Activated B cell treated with CpG ODN at 0.5 μM for 24 hours (primary cell): ENCODE measurements at regions of chr11 and their contacts with region 1.

Region 1: GRCh38 chr11:26043665-26044064 is 288.3 kb upstream of the ANO3 start:
- DNase-seq: no peak
- ATAC-seq: peak; percentile 65
- H3K4me3 Mint-ChIP-seq: no peak overlapping the region
- H3K27ac Mint-ChIP-seq: no peak overlapping the region
- H3K4me1 Mint-ChIP-seq: peaks cover 14% of the 10 kb centered on the region
- H3K27me3 Mint-ChIP-seq: no peaks in the 10 kb centered on the region
- CTCF ChIP-seq: no peak

Region 2: DNA sequence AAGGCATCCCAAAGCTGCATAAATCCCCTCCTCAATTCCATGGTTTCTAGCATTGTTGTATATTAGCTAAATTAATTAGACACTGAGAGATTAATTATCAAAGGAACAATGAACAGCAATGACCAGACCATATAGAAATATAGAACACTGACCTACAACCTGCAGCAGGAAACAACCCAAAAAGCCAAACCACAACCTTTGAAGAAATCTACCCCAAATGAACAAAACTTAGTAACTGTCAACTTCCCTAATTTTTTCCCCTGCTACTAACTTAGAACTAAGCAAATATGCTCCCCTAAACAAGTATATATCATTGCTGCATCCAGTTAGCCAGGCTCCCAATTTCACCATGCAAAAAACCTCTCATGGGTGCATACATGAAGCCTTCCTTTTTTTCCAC is 20.2 kb after region 1 on chr11:
- CTCF ChIA-PET with region 1: no interaction called
- POLR2A ChIA-PET with region 1: no interaction called
- intact Hi-C with region 1: loop called (anchors 2 kb)
- DNase-seq: no peak
- ATAC-seq: no peak
- H3K4me3 Mint-ChIP-seq: no peak overlapping the region
- H3K27ac Mint-ChIP-seq: no peak overlapping the region
- H3K4me1 Mint-ChIP-seq: peaks cover 34% of the 10 kb centered on the region
- H3K27me3 Mint-ChIP-seq: no peaks in the 10 kb centered on the region
- CTCF ChIP-seq: no peak